ENCODE measurements at regions of chr15 and their contacts with region 1.

Region 1: DNA sequence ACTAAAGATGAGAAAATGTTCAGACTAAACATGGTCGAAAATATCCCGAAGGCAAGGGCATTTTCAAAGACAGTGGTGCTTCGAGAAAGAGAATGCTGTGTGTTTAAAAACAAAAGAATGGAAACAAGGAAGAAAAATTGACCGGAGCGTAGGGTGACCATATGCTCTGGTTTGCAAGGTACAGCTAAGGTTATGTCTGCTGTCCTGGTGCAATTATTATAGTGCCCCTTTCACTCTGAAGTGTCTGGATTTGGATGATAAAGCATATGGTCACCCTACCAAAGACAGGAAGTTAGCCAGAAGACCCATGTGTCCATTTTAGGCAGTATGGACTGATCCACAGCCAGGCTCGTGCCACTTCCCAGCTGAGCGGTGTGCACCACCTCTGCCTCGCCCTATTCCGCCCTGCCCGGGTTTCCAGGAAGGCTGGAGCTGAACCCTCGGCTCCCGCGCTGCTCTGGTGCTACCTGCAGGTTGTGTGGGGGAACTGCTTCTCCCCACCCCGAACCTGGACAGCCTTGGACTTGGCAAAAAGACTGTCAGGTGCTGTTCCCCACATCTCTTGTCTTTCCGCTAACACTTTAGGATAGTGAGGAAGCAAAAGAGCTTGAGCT is 25.2 kb downstream of the GOLGA6D start:
- DNase-seq: peak; percentile 87
- H3K4me3 Mint-ChIP-seq: no peak overlapping the region
- H3K27ac Mint-ChIP-seq: no peak overlapping the region
- H3K4me1 Mint-ChIP-seq: peaks cover 11% of the 10 kb centered on the region
- H3K27me3 Mint-ChIP-seq: peaks cover 80% of the 10 kb centered on the region
- CTCF ChIP-seq: peak; percentile 83

Region 2: GRCh38 chr15:75029378-75030022 is 278.4 kb before region 1 on chr15:
- CTCF ChIA-PET with region 1: interaction called, 7 read pairs
- intact Hi-C with region 1: loop called (anchors 1 kb)
- DNase-seq: peak; percentile 95
- H3K4me3 Mint-ChIP-seq: no peak overlapping the region
- H3K27ac Mint-ChIP-seq: no peak overlapping the region
- H3K4me1 Mint-ChIP-seq: peaks cover 45% of the 10 kb centered on the region
- H3K27me3 Mint-ChIP-seq: no peaks in the 10 kb centered on the region
- CTCF ChIP-seq: peak; percentile 97

Region 3: DNA sequence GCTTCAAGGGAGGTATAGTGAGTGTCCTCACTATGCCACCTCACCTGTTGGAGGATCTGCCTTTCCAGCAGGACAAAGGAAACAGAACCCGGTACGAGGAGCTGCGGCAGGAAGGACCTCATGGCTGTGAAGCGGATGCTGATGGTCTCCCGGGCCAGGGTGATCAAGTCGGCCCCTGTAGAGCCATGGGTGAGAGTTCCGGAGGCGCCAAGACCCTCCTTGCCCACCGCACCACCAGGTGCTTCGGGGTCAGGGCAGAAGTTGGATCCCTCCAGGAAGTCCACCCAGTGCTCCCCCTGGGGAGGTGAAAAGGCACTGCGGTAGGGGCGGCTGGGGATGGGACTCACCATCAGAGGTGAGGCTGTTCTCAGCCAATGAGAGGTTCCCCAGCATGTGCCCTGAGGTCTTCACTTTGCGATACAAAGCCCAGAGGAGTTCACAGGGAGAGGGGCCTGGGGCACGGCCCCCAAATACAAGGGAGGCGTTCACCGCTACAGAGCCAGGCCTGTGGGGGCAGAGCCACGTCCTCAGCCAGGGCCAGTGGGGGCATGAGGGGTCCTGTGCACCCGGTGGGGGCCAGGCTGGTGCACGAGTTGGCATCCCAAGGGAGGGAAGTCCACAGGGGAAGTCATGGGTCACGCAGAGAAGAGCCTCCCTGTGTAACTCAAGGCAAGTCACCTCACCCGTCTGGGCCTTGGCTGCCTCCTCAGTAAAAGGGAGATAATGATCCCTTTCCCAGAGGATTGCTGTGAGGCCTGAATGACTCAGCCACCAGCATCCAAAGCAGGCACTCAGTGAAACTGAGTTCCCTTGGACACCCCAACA is 78.5 kb before region 1 on chr15:
- CTCF ChIA-PET with region 1: no interaction called
- intact Hi-C with region 1: loop called (anchors 10 kb)
- DNase-seq: no peak
- H3K4me3 Mint-ChIP-seq: no peak overlapping the region
- H3K27ac Mint-ChIP-seq: no peak overlapping the region
- H3K4me1 Mint-ChIP-seq: no peaks in the 10 kb centered on the region
- H3K27me3 Mint-ChIP-seq: peaks cover 79% of the 10 kb centered on the region
- CTCF ChIP-seq: no peak

Region 4: DNA sequence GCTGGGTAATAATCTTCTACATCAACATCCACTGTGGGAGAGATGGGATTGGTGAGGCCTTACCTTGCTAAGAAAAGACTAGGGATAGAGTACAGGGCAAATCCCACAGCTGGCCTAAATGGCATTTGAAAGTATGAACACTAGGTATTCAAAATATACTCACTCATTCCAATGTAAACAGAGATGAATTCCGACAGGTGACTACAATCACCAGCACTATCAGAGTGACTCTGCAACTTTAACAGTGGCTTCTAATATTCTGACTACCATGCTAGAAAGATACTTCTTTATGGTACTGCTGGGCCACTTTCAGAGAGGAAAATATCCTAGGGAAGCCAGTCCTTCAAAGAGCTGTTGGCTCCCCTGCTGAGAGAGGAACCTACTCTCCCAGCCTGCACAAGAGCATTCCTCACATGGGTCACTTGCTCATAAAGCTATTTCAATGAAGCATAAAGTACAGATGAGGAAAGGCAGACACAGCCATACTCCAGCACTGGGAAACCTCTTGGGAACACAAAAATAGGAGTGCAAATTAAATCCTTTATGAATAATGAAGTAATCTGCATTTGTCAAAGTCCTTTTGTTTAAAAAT is 82.0 kb after region 1 on chr15:
- CTCF ChIA-PET with region 1: no interaction called
- intact Hi-C with region 1: no loop called
- DNase-seq: no peak
- H3K4me3 Mint-ChIP-seq: no peak overlapping the region
- H3K27ac Mint-ChIP-seq: no peak overlapping the region
- H3K4me1 Mint-ChIP-seq: no peaks in the 10 kb centered on the region
- H3K27me3 Mint-ChIP-seq: no peaks in the 10 kb centered on the region
- CTCF ChIP-seq: no peak

Measured in Calu3 (cell line).